ENCODE measurements at regions of chr7 and their contacts with region 1.

Region 1: DNA sequence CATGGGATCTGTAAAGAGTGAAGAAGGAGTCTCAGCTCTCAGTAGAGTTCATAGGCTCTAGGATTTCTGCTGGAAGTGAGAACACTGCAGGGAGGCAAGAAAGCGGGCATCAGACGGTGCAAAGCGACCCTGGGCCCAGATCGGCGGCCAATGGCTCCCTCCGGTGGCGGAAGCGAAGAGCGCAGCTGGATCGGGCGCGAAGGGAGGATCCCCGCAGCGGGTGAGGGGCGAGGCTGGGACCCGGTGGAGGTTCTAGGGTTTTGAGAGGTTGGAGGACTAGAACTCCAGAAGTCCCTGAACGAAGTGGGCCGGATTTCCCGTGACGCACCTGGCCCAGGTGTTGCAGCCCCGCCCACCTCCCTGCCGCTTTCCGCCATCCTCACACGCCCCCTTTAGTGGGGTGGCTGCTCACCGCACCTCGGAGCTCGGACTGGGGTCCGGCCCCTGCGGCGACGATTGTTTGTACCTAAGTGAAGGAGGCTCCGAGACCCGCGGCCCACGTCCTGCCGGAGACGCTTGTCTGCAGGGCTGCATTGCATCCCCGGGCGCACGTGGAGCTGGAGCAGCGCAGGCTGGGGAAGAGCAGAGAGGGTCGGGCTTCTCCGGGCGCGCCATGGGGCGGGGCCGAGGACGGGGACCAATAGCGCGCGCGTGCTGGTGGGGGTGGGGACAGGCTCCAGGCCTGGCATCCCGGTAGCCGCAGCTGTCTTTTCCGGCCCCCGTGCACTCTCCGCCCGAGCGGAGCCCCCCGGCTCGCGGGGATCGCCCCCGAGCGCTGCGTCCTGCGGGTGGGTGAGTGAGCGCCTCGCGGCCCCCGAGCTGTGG is at the start of gene SLC12A9:
- DNase-seq: peak; percentile 90 to 97
- H3K4me3 ChIP-seq: peak within 1 kb of the TSS; percentile 69 to 85 (median 70)
- H3K27ac ChIP-seq: peak within 1 kb of the TSS; percentile 60 to 85 (median 76)
- H3K4me1 ChIP-seq: peaks cover 17 to 30% (median 24%) of the 10 kb centered on the region in 4 donors
- H3K27me3 ChIP-seq: no peaks in the 10 kb centered on the region
- CTCF ChIP-seq: peak in 5 of 7 experiments; percentile 88 to 94 (median 92)
- EP300 ChIP-seq: no peak
- POLR2A ChIP-seq: no peak
- total RNA-seq, gene SLC12A9: 2.9 to 44.6 (median 25.9) TPM

Region 2: DNA sequence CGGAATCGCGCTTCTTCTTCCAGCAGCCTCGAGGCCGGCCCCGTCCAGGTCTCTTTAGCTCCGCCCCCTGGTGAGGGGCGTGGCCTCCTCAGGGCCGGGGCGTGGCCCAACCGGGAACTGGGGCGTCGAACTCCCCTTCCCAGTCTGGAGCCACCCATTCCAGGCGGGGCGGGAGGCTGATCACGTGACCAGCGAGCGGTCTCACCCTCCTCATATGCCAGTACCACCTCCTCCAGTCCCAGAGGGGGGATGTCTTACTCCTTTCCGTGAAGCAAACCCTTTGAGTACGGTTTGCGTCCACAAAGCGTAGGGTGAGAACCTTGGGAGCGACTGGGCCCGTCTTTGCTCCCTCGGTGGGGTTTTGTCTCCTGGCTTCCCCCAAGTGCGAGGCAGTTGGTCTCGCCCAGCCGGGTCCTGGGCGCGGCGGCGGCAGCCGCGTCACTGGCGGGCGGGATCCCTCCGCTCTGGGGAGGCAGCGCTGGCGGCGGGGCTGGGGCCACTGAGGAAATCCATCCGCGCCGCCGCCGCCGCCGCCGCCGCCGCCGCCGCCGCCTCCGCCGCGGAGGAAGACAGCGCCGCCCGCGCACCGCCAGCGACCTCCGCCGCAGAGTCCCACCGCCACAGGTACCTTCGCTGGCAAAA is 178.8 kb before region 1 on chr7 and contains the start of gene GNB2:
- intact Hi-C with region 1: no loop called
- DNase-seq: peak; percentile 99
- H3K4me3 ChIP-seq: peak within 1 kb of the TSS; percentile 97 to 99 (median 97)
- H3K27ac ChIP-seq: peak within 1 kb of the TSS; percentile 98 to 100 (median 99)
- H3K4me1 ChIP-seq: peaks cover 4 to 33% (median 24%) of the 10 kb centered on the region in 4 donors
- H3K27me3 ChIP-seq: no peaks in the 10 kb centered on the region
- CTCF ChIP-seq: no peak
- EP300 ChIP-seq: no peak
- POLR2A ChIP-seq: no peak
- total RNA-seq, gene GNB2: 52.9 to 290 (median 152) TPM

Region 3: GRCh38 chr7:100705753-100706671 is 146.2 kb before region 1 on chr7 and contains the start of gene POP7:
- intact Hi-C with region 1: loop called (anchors 10 kb)
- DNase-seq: peak; percentile 100
- H3K4me3 ChIP-seq: peak within 1 kb of the TSS; percentile 75 to 90 (median 84)
- H3K27ac ChIP-seq: peak within 1 kb of the TSS; percentile 91 to 97 (median 92)
- H3K4me1 ChIP-seq: peaks cover 13 to 29% (median 28%) of the 10 kb centered on the region in 4 donors
- H3K27me3 ChIP-seq: no peaks in the 10 kb centered on the region
- CTCF ChIP-seq: no peak
- EP300 ChIP-seq: no peak
- POLR2A ChIP-seq: no peak
- total RNA-seq, gene POP7: 23.3 to 70.1 (median 38.3) TPM in 4 of 5 donors, not detected in the other

Region 4: GRCh38 chr7:100803398-100804233 is 48.6 kb before region 1 on chr7:
- intact Hi-C with region 1: loop called (anchors 5 kb)
- DNase-seq: peak; percentile 83 to 92
- H3K4me3 ChIP-seq: peak overlapping the region in 2 of 4 donors; percentile 18 to 32
- H3K27ac ChIP-seq: peak overlapping the region; percentile 7 to 80 (median 55)
- H3K4me1 ChIP-seq: peaks cover 24 to 50% (median 33%) of the 10 kb centered on the region in 4 donors
- H3K27me3 ChIP-seq: peaks cover 0 to 25% (median 0%) of the 10 kb centered on the region in 3 donors
- CTCF ChIP-seq: no peak
- EP300 ChIP-seq: no peak
- POLR2A ChIP-seq: no peak

Measured in stomach (tissue), 19 donors.